ENCODE measurements at regions of chr11 and their contacts with region 1.

Region 1: GRCh38 chr11:119101759-119102423 is at the start of gene DPAGT1:
- H3K4me3 Mint-ChIP-seq: peak within 1 kb of the TSS; percentile 94
- H3K27ac Mint-ChIP-seq: peak within 1 kb of the TSS; percentile 90
- H3K4me1 Mint-ChIP-seq: peaks cover 64% of the 10 kb centered on the region
- H3K27me3 Mint-ChIP-seq: no peaks in the 10 kb centered on the region

Region 2: DNA sequence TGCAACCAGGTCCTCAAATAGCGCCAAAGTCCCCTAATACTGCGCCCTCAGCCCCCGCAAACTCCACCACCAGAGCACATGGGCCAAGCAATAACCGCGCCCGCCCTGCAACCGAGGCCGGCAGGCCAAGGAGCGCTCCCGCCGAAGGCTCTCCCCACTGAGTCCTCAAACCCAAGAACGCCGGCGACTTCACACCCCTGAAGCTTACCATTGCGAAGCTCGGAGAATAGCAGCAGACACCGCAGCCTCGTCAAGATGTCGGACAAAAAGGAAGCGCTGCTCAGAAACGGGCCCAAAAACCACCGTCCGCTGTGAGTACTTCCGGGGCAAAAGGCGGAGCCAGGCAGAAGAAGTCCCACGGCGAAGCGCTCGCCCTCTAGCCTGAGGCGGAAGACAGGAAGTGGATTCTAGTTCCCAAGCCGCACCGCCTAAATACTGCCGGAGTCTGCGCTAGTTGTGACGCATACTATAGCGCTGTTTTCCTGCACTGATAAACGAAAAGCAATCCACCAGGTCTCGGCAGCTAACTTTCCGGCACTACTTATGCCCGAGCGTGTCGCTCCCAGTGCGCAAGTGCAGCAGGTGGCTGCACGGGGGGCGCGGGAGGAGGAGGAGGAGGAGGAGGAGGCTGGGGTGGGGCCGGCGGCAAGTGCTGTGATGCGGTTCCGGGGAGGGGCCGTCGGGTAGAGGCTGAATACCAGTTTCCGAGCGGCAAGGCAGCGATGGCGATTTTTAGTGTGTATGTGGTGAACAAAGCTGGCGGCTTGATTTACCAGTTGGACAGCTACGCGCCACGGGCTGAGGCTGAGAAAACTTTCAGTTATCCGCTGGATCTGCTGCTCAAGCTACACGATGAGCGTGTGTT is 83.6 kb before region 1 on chr11 and contains the starts of genes RPS25 and TRAPPC4:
- intact Hi-C with region 1: loop called (anchors 2 kb)
- H3K4me3 Mint-ChIP-seq: peak within 1 kb of the TSS; percentile 98
- H3K27ac Mint-ChIP-seq: peak within 1 kb of the TSS; percentile 99
- H3K4me1 Mint-ChIP-seq: peaks cover 31% of the 10 kb centered on the region
- H3K27me3 Mint-ChIP-seq: no peaks in the 10 kb centered on the region

Region 3: DNA sequence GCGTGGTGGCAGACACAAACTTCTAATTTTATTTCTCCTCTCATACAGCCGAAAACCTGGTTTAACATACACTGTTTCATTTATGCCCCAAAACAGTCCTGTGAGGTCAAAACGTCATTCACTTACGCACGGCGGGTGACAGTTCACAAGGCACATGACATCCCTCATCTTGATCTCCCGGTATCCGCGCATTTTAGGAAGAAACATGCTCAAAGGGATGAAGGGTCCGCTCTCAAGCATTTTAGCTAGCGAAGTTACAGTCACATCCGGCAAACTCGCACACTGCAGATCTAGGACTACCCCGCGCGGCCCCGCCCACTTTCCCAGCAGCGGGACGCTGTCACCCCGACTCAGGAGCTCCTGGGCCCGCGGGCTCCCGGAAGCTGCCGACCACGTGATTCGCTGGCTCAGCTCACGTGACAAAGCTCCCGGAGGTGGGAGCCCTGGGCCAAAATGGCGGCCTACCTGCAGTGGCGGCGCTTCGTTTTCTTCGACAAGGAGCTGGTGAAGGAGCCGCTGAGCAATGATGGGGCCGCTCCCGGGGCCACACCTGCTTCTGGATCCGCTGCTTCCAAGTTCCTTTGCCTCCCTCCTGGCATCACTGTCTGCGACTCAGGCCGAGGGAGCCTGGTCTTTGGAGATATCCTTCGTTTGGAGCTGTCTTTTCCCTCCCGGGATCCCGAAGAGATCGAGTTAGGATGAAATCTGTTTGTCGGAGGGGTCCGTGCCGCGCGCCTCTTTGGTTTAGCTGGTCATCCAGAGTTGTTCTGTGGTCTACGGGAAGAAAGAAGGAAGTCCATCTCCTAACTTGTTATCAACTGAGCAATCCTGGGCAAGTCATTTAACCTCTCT is 34.3 kb before region 1 on chr11 and contains the start of gene VPS11:
- intact Hi-C with region 1: no loop called
- H3K4me3 Mint-ChIP-seq: peak within 1 kb of the TSS; percentile 82
- H3K27ac Mint-ChIP-seq: peak within 1 kb of the TSS; percentile 94
- H3K4me1 Mint-ChIP-seq: peaks cover 30% of the 10 kb centered on the region
- H3K27me3 Mint-ChIP-seq: no peaks in the 10 kb centered on the region

Region 4: GRCh38 chr11:119121008-119121810 is 19.3 kb after region 1 on chr11 and contains the start of gene HINFP:
- intact Hi-C with region 1: loop called (anchors 2 kb)
- H3K4me3 Mint-ChIP-seq: peak within 1 kb of the TSS; percentile 92
- H3K27ac Mint-ChIP-seq: peak within 1 kb of the TSS; percentile 87
- H3K4me1 Mint-ChIP-seq: peaks cover 43% of the 10 kb centered on the region
- H3K27me3 Mint-ChIP-seq: no peaks in the 10 kb centered on the region

Region 5: DNA sequence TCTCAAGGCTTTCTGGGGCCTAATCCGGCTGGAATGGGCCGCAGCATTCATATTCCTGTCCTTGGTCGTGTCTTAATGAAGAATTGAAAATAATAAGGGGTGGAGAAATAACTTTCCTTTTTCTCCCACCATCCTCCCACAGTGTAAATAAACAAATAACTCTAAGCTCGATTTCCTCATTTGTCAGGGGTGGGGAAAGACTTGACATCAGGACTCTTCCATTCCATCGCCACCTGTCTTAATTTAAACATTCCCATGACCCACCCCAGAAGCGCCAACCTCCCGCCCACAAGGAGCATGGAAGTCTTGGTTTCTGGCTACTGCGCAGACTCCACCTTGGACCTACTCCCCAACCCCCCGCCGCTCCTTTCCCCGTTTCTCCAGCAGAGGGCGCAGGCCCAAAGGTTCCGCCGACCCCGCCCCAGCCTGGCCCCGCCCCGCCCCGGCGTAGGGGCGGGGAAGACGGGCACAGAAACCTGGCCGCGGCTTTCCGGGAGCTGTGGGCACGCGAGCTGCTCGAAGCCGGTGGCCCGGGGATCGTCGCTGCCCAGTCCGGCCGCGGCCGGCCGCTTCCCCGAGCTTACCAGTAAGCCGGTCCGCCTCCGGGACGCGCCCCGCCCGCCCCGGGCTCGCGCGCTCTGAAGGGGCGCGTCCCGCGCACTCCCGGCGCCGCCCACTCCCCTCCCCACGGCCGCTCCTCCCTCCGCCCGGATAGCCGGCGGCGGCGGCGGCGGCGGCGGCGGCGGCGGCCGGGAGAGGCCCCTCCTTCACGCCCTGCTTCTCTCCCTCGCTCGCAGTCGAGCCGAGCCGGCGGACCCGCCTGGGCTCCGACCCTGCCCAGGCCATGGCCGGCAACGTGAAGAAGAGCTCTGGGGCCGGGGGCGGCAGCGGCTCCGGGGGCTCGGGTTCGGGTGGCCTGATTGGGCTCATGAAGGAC is 104.0 kb after region 1 on chr11 and contains the start of gene CBL:
- intact Hi-C with region 1: loop called (anchors 5 kb)
- H3K4me3 Mint-ChIP-seq: peak within 1 kb of the TSS; percentile 91
- H3K27ac Mint-ChIP-seq: peak within 1 kb of the TSS; percentile 94
- H3K4me1 Mint-ChIP-seq: peaks cover 45% of the 10 kb centered on the region
- H3K27me3 Mint-ChIP-seq: no peaks in the 10 kb centered on the region

Measured in dendritic cell treated with granulocyte-macrophage colony-stimulating factor and Interleukin-4, amounts not matched to agents 40 ng/mL and 50 ng/mL, for 4 days (primary cell).